SK-N-SH (cell line): ENCODE measurements at regions of chr1 and their contacts with region 1.

Region 1: GRCh38 chr1:201023517-201023902 is at the start of gene KIF21B:
- DNase-seq: peak; percentile 97
- H3K4me3 ChIP-seq: peak within 1 kb of the TSS; percentile 51 to 58
- H3K27ac ChIP-seq: no peak within 1 kb of the TSS
- H3K4me1 ChIP-seq: peaks cover 5 to 7% of the 10 kb centered on the region in 2 experiments; a peak in 1 of 4 replicates
- H3K27me3 ChIP-seq: no peaks in the 10 kb centered on the region
- CTCF ChIP-seq: no peak
- EP300 ChIP-seq: no peak
- RAD21 ChIP-seq: no peak
- polyA plus RNA-seq, gene KIF21B: 0.24 and 0.26 TPM in 2 replicates

Region 2: GRCh38 chr1:200896531-200897196 is 126.8 kb before region 1 on chr1:
- CTCF ChIA-PET with region 1: no interaction called
- POLR2A ChIA-PET with region 1: no interaction called
- DNase-seq: no peak
- H3K4me3 ChIP-seq: no peak overlapping the region
- H3K27ac ChIP-seq: no peak overlapping the region
- H3K4me1 ChIP-seq: no peaks in the 10 kb centered on the region; a peak in 1 of 4 replicates
- H3K27me3 ChIP-seq: no peaks in the 10 kb centered on the region
- CTCF ChIP-seq: no peak
- EP300 ChIP-seq: no peak
- RAD21 ChIP-seq: no peak

Region 3: GRCh38 chr1:201009962-201010645 is 13.4 kb before region 1 on chr1:
- CTCF ChIA-PET with region 1: interaction called, 12 read pairs
- POLR2A ChIA-PET with region 1: no interaction called
- DNase-seq: no peak
- H3K4me3 ChIP-seq: no peak overlapping the region
- H3K27ac ChIP-seq: no peak overlapping the region
- H3K4me1 ChIP-seq: peaks cover 0 to 16% of the 10 kb centered on the region in 2 experiments; a peak in 2 of 4 replicates
- H3K27me3 ChIP-seq: no peaks in the 10 kb centered on the region
- CTCF ChIP-seq: no peak
- EP300 ChIP-seq: no peak
- RAD21 ChIP-seq: no peak

Region 4: DNA sequence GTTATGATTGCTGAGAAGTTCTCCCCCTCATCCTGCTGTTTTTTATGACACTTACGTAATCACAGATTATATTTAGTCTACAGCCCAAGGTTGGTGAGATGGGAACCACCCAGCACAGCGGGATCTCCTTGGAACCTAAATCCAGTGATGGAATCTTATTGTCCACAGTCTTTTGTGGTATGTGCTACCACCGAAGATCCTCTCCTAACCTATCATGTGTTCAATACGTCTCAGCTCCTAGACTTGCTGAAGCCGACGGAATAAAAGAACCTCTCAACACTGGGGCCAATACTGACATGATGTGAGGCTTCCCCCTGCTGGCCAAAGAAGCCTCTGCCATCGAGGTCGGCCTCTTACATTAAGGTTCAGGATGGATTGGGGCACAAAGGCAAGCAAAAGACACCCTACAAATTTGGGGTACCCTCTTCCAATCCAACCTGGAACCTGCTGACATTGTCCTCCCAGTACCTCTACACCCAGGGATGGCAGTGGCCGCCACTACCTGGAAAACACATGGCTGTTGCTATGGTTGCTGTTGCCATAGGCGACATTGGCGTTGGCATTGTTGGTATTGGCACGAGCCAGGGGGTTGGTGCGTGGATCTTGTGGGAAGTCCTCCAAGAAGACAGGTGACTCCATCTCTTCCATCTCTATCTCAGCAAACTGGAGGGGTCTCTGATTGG is 19.4 kb after region 1 on chr1:
- CTCF ChIA-PET with region 1: interaction called, 92 read pairs
- POLR2A ChIA-PET with region 1: interaction called, 3 read pairs
- DNase-seq: peak; percentile 76
- H3K4me3 ChIP-seq: peak overlapping the region in 1 of 2 experiments; percentile 7; a peak in 1 of 4 replicates
- H3K27ac ChIP-seq: no peak overlapping the region
- H3K4me1 ChIP-seq: peaks cover 0 to 7% of the 10 kb centered on the region in 2 experiments; a peak in 1 of 4 replicates
- H3K27me3 ChIP-seq: peaks cover 19% of the 10 kb centered on the region; the same call in 1 of the 2 replicates
- CTCF ChIP-seq: peak; percentile 87
- EP300 ChIP-seq: no peak
- RAD21 ChIP-seq: peak; percentile 92